MCF 10A (cell line): ENCODE measurements at regions of chr1 and their contacts with region 1.

Region 1: GRCh38 chr1:162561037-162561616 is 395 bp upstream of the UAP1 start:
- DNase-seq: peak; percentile 100
- H3K4me3 Mint-ChIP-seq: peak overlapping the region; percentile 82
- H3K27ac Mint-ChIP-seq: peak overlapping the region; percentile 91
- H3K4me1 Mint-ChIP-seq: peaks cover 39% of the 10 kb centered on the region
- H3K27me3 Mint-ChIP-seq: no peaks in the 10 kb centered on the region
- CTCF ChIP-seq: no peak

Region 2: GRCh38 chr1:162381383-162381782 is 179.7 kb before region 1 on chr1 and contains the start of gene C1orf226:
- CTCF ChIA-PET with region 1: no interaction called
- POLR2A ChIA-PET with region 1: interaction called, 13 read pairs
- intact Hi-C with region 1: no loop called
- DNase-seq: peak; percentile 95
- H3K4me3 Mint-ChIP-seq: peak within 1 kb of the TSS; percentile 26
- H3K27ac Mint-ChIP-seq: peak within 1 kb of the TSS; percentile 89
- H3K4me1 Mint-ChIP-seq: peaks cover 50% of the 10 kb centered on the region
- H3K27me3 Mint-ChIP-seq: no peaks in the 10 kb centered on the region
- CTCF ChIP-seq: no peak
- total RNA-seq, gene C1orf226: 3.1 and 3.3 TPM in 2 replicates

Region 3: DNA sequence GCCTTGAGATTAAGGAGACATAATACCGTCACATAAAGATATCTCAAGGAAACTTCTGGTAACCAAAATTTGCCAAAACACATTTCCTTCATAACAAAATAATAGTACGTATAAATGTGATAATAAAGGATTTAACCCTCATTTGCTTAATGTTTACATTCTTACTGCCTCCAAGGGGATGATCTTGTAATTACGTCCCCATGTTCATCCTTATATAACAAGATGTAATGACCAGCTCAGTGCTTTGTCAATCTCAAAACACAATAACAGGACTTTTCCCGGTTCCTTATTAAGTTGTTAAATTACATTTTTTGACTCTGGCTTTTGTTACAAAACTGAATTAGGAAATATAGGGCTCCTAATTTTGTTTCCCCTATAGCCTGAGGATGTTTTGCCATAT is 104.8 kb before region 1 on chr1:
- CTCF ChIA-PET with region 1: no interaction called
- POLR2A ChIA-PET with region 1: no interaction called
- intact Hi-C with region 1: no loop called
- DNase-seq: no peak
- H3K4me3 Mint-ChIP-seq: no peak overlapping the region
- H3K27ac Mint-ChIP-seq: no peak overlapping the region
- H3K4me1 Mint-ChIP-seq: no peaks in the 10 kb centered on the region
- H3K27me3 Mint-ChIP-seq: no peaks in the 10 kb centered on the region
- CTCF ChIP-seq: peak; percentile 15

Region 4: DNA sequence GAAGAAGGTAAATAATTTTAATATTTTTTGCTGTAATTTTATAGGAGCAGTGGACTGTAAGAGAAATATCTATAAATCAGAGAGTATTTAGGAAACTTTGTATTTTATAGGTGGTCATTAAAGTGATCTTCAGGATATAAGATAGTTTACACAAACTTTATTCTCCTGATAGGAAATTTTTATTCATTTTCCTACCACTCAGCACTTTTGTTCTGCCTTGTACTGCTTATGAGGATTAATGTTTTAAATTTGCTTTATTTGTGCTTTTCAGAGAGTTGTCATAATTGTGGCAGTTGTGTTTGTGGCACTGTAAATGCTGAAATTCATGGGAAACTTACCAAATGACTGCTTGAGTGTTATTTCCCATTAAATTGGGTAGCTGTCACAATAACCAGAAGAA is 33.8 kb before region 1 on chr1:
- CTCF ChIA-PET with region 1: interaction called, 3 read pairs
- POLR2A ChIA-PET with region 1: interaction called, 7 read pairs
- intact Hi-C with region 1: loop called (anchors 5 kb)
- DNase-seq: no peak
- H3K4me3 Mint-ChIP-seq: no peak overlapping the region
- H3K27ac Mint-ChIP-seq: no peak overlapping the region
- H3K4me1 Mint-ChIP-seq: no peaks in the 10 kb centered on the region
- H3K27me3 Mint-ChIP-seq: no peaks in the 10 kb centered on the region
- CTCF ChIP-seq: no peak

Region 5: GRCh38 chr1:162548170-162548569 is 13.0 kb before region 1 on chr1:
- CTCF ChIA-PET with region 1: interaction called, 5 read pairs
- POLR2A ChIA-PET with region 1: interaction called, 245 read pairs
- intact Hi-C with region 1: no loop called
- DNase-seq: peak; percentile 81
- H3K4me3 Mint-ChIP-seq: peak overlapping the region; percentile 10
- H3K27ac Mint-ChIP-seq: peak overlapping the region; percentile 86
- H3K4me1 Mint-ChIP-seq: peaks cover 42% of the 10 kb centered on the region
- H3K27me3 Mint-ChIP-seq: no peaks in the 10 kb centered on the region
- CTCF ChIP-seq: no peak

Region 6: GRCh38 chr1:162605225-162605927 is 44.2 kb after region 1 on chr1:
- CTCF ChIA-PET with region 1: no interaction called
- POLR2A ChIA-PET with region 1: interaction called, 17 read pairs
- intact Hi-C with region 1: no loop called
- DNase-seq: peak; percentile 98
- H3K4me3 Mint-ChIP-seq: peak overlapping the region; percentile 13
- H3K27ac Mint-ChIP-seq: peak overlapping the region; percentile 91
- H3K4me1 Mint-ChIP-seq: peaks cover 20% of the 10 kb centered on the region
- H3K27me3 Mint-ChIP-seq: no peaks in the 10 kb centered on the region
- CTCF ChIP-seq: no peak